Posterior vena cava (tissue), 2 donors: ENCODE measurements at regions of chr2 and their contacts with region 1.

Region 1: DNA sequence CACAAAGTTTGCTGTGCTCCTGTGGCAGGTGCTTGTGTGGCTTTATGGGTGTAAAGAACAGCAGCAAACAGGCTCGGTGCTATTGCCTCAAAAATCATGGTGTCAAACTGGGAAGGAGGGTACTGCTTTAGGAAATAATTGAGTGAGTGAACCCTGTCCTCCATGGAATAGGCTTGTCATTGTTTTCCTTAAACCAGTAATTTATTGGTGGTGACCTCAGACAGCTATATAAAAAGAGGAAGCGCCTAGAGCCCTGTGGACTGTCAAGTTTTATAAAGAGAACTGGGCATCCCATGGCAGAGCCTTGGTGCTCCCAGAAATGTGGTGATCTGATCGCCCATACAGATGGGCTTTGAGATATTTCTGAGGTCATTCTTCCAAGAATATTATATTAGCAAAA is 4.7 kb upstream of the CXCR4 start:
- DNase-seq: no peak

Region 2: DNA sequence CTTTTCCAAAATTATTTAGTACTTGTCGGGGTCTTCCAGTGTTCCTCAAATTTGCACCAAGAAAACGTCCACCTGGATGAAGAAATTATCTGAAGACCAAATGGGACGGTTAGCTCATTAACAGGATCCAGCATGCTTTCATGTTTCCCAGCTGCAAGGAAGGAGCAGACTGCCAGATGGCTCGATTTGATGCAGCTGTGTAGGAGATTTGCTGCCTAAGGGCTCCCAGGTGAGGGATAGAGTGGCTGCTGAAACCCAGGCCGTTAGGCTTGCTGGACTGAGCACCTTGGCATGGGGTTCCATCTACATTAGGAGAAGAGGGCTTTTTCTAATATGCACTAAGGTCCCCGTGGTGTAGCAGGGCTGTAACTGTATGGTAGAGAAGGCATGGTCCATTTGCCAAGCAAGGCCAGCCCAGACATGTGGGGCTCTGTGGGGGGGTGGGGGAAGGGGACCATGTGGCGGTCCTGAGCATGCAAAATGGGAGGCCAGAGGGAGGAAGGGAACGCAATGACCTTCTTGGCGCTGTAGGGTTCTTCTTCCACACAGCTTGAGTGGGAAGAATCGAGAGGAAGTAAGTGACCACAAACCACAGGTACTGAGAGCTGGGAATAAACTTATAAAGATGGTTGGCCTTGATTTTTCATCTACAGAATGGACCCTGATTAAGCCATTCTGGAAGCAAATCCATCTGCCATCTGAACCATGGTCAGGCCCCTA is 1547.9 kb before region 1 on chr2:
- intact Hi-C with region 1: no loop called
- DNase-seq: no peak

Region 3: GRCh38 chr2:136045835-136046570 is 76.7 kb before region 1 on chr2:
- intact Hi-C with region 1: loop called in 1 of 2 experiments (anchors 2 kb)
- DNase-seq: no peak